Aorta (tissue), 5 donors: ENCODE measurements at regions of chrX and their contacts with region 1.

Region 1: DNA sequence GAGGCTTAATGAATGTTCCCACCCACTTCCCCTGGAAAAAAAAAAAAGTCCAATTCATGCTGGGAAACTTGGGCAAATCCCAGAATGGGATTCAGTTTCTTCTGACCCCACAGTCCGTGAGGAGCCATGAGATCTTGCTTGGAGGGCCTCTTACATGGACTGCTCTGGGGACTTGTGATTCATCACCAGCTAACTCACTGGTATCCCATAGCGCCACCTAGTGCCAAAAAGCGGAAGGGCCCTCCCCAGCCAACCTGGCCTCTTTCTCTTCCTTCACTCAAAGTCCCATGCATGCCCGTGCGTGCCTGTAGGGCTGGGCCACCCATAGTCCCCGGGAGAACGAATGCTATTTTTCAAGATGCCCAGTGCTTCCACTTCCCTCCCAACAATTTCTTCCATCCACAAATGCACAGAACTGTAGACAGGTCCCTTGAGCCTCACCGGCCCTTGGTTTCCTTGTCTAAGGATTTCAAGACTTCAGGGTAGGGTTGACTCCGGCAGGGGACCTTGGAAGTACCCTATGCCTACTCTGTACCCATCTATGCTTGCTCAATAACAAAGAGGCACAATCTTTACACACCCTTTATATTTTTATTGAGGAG is 5.1 kb downstream of the RTL5 start:
- DNase-seq: peak; percentile 92 to 94
- ATAC-seq: peak; percentile 90
- H3K4me3 ChIP-seq: no peak overlapping the region
- H3K27ac ChIP-seq: peak overlapping the region in 1 of 2 donors; percentile 38
- H3K4me1 ChIP-seq: no peaks in the 10 kb centered on the region
- H3K27me3 ChIP-seq: no peaks in the 10 kb centered on the region

Region 2: GRCh38 chrX:72003811-72004750 is 122.6 kb before region 1 on chrX:
- intact Hi-C with region 1: loop called (anchors 5 kb)
- DNase-seq: peak; percentile 67 to 84
- ATAC-seq: peak; percentile 49
- H3K4me3 ChIP-seq: no peak overlapping the region
- H3K27ac ChIP-seq: peak overlapping the region in 1 of 2 donors; percentile 73
- H3K4me1 ChIP-seq: no peaks in the 10 kb centered on the region
- H3K27me3 ChIP-seq: no peaks in the 10 kb centered on the region

Region 3: GRCh38 chrX:72018277-72019112 is 108.1 kb before region 1 on chrX:
- intact Hi-C with region 1: loop called (anchors 1 to 2 kb)
- DNase-seq: peak; percentile 91 to 95
- ATAC-seq: peak; percentile 94
- H3K4me3 ChIP-seq: no peak overlapping the region
- H3K27ac ChIP-seq: no peak overlapping the region
- H3K4me1 ChIP-seq: no peaks in the 10 kb centered on the region
- H3K27me3 ChIP-seq: no peaks in the 10 kb centered on the region

Region 4: GRCh38 chrX:72201836-72202536 is 75.3 kb after region 1 on chrX:
- intact Hi-C with region 1: no loop called
- DNase-seq: no peak
- ATAC-seq: no peak
- H3K4me3 ChIP-seq: no peak overlapping the region
- H3K27ac ChIP-seq: no peak overlapping the region
- H3K4me1 ChIP-seq: no peaks in the 10 kb centered on the region
- H3K27me3 ChIP-seq: no peaks in the 10 kb centered on the region